ENCODE measurements at regions of chr10 and their contacts with region 1.

Region 1: DNA sequence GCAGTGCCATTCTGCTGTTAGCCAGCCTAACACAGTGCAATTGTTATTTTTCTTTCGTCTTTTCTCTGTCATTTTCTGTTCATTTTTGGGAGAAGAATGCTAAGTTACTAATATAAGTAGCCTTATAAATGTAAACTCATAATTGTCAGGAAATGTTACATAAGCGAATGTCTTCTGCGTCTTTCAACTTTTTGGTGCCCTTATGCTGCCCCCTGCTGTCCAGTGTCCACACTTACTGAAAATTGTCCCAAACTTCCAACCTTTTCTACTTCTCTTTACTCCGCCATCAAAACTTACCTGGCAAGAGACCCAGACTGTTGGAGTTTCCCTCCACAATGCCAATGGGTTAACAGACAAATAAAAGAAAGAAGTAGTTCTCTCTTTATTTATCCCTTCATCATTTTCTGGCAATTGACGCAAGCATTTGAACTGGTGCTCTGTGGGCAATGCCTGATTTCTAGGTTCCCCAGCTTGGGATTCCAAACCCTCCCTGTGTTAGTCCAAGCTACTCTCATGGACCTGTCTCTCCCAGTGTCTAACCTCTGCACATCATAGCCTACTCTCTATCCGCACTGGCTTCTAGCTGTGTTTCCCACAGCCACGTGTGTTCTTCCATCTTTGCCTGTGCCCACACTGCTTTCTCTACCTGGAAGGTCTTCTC is 21.0 kb upstream of the EPC1 start:
- DNase-seq: peak; percentile 60 to 91
- ATAC-seq: peak; percentile 81 to 82 (median 81)
- H3K4me3 ChIP-seq: no peak overlapping the region
- H3K4me3 Mint-ChIP-seq: peak overlapping the region; percentile 63
- H3K27ac ChIP-seq: no peak overlapping the region
- H3K27ac Mint-ChIP-seq: peak overlapping the region; percentile 32 to 37
- H3K4me1 ChIP-seq: no peaks in the 10 kb centered on the region
- H3K4me1 Mint-ChIP-seq: peaks cover 21 to 32% of the 10 kb centered on the region in 2 donors
- H3K27me3 ChIP-seq: no peaks in the 10 kb centered on the region
- H3K27me3 Mint-ChIP-seq: no peaks in the 10 kb centered on the region
- CTCF ChIP-seq: peak; percentile 93

Region 2: GRCh38 chr10:32190890-32191491 is 176.9 kb before region 1 on chr10:
- intact Hi-C with region 1: loop called (anchors 1 kb)
- DNase-seq: peak in 1 of 2 donors; percentile 68
- ATAC-seq: peak in 2 of 3 donors; percentile 59 to 64
- H3K4me3 ChIP-seq: no peak overlapping the region
- H3K4me3 Mint-ChIP-seq: no peak overlapping the region
- H3K27ac ChIP-seq: no peak overlapping the region
- H3K27ac Mint-ChIP-seq: no peak overlapping the region
- H3K4me1 ChIP-seq: no peaks in the 10 kb centered on the region
- H3K4me1 Mint-ChIP-seq: peaks cover 0 to 5% of the 10 kb centered on the region in 2 donors
- H3K27me3 ChIP-seq: no peaks in the 10 kb centered on the region
- H3K27me3 Mint-ChIP-seq: no peaks in the 10 kb centered on the region
- CTCF ChIP-seq: peak; percentile 83

Region 3: GRCh38 chr10:32256613-32257437 is 111.1 kb before region 1 on chr10:
- intact Hi-C with region 1: loop called (anchors 1 kb)
- DNase-seq: peak; percentile 70 to 85
- ATAC-seq: peak; percentile 79 to 95 (median 89)
- H3K4me3 ChIP-seq: no peak overlapping the region
- H3K4me3 Mint-ChIP-seq: no peak overlapping the region
- H3K27ac ChIP-seq: no peak overlapping the region
- H3K27ac Mint-ChIP-seq: no peak overlapping the region
- H3K4me1 ChIP-seq: no peaks in the 10 kb centered on the region
- H3K4me1 Mint-ChIP-seq: peaks cover 5 to 6% of the 10 kb centered on the region in 2 donors
- H3K27me3 ChIP-seq: no peaks in the 10 kb centered on the region
- H3K27me3 Mint-ChIP-seq: no peaks in the 10 kb centered on the region
- CTCF ChIP-seq: peak; percentile 90

Region 4: GRCh38 chr10:32426186-32426585 is 58.3 kb after region 1 on chr10:
- intact Hi-C with region 1: no loop called
- DNase-seq: no peak
- ATAC-seq: no peak
- H3K4me3 ChIP-seq: no peak overlapping the region
- H3K4me3 Mint-ChIP-seq: no peak overlapping the region
- H3K27ac ChIP-seq: no peak overlapping the region
- H3K27ac Mint-ChIP-seq: no peak overlapping the region
- H3K4me1 ChIP-seq: no peaks in the 10 kb centered on the region
- H3K4me1 Mint-ChIP-seq: no peaks in the 10 kb centered on the region
- H3K27me3 ChIP-seq: no peaks in the 10 kb centered on the region
- H3K27me3 Mint-ChIP-seq: peaks cover 16 to 55% of the 10 kb centered on the region in 2 donors
- CTCF ChIP-seq: no peak

Measured in natural killer cell (primary cell).